ENCODE measurements at regions of chr12 and their contacts with region 1.

Region 1: GRCh38 chr12:2268556-2269286 is 215.9 kb downstream of the CACNA1C start:
- DNase-seq: no peak
- H3K4me3 ChIP-seq: no peak overlapping the region
- H3K27ac ChIP-seq: no peak overlapping the region
- H3K4me1 ChIP-seq: peaks cover under 1% of the 10 kb centered on the region
- H3K27me3 ChIP-seq: no peaks in the 10 kb centered on the region
- CTCF ChIP-seq: no peak
- EP300 ChIP-seq: no peak
- POLR2A ChIP-seq: no peak

Region 2: DNA sequence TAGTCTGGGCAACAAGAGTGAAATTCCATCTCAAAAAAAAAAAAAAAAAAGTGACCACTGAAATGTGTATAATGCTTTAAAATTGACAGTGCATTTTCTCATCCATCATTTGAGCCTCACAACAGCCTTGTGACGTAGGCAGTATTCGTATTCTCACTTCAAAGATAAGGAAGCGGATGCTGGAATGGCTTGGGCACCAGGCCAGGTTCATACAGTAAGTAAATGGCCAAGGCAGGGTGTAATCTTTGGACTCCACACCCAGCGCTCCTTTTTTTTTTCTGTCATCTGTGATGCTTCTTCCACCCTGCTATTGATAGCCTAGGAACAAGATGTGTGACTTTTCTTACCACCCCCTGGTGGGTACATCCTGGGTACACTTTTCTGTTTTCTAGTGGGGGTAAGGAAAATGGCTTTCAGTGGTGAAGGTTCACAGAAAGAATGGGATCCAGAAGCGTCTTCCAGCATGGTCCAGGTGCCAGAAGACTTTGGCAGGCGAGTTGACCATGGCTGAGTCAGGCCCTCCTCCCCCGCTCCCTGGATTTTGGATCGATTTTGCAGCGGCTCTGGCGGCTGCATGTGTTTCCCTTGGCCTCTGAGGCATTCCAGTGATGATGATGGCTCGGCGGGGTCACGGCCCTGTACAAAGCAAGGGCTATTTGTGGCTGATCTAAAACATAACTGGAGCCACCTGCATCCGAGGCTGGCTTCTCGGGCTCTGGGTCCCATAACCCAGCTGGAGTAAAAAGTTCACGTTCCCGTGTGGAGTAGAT is 105.4 kb before region 1 on chr12:
- intact Hi-C with region 1: no loop called
- DNase-seq: peak; percentile 89 to 94 (median 91)
- H3K4me3 ChIP-seq: no peak overlapping the region
- H3K27ac ChIP-seq: peak overlapping the region; percentile 51 to 76
- H3K4me1 ChIP-seq: peaks cover 14% of the 10 kb centered on the region
- H3K27me3 ChIP-seq: no peaks in the 10 kb centered on the region
- CTCF ChIP-seq: peak in 1 of 3 donors; percentile 20
- EP300 ChIP-seq: peak; percentile 58
- POLR2A ChIP-seq: no peak

Region 3: GRCh38 chr12:2336409-2336829 is 67.7 kb after region 1 on chr12:
- intact Hi-C with region 1: loop called in 1 of 4 experiments (anchors 2 kb)
- DNase-seq: no peak
- H3K4me3 ChIP-seq: no peak overlapping the region
- H3K27ac ChIP-seq: peak overlapping the region in 1 of 2 donors; percentile 23
- H3K4me1 ChIP-seq: no peaks in the 10 kb centered on the region
- H3K27me3 ChIP-seq: no peaks in the 10 kb centered on the region
- CTCF ChIP-seq: no peak
- EP300 ChIP-seq: no peak
- POLR2A ChIP-seq: no peak

Region 4: DNA sequence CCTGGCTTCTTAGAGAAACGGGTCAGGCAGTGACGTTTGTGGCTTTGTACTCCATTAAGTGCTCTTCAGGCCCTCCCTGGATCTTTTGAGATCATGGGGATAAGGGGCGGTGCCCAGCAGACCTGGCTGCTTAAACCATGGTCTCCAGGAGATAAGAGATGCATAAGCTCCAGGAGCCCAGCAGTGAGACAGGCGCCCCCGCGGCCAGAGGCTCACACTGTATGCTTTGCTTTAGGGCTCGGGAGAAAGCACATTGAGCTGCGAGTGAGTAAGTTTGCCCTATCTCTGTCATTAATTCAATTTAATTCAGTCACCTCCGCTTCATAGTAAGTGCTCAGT is 143.6 kb after region 1 on chr12:
- intact Hi-C with region 1: no loop called
- DNase-seq: no peak
- H3K4me3 ChIP-seq: no peak overlapping the region
- H3K27ac ChIP-seq: no peak overlapping the region
- H3K4me1 ChIP-seq: peaks cover 7% of the 10 kb centered on the region
- H3K27me3 ChIP-seq: no peaks in the 10 kb centered on the region
- CTCF ChIP-seq: no peak
- EP300 ChIP-seq: no peak
- POLR2A ChIP-seq: no peak